ENCODE measurements at regions of chr7 and their contacts with region 1.

Region 1: GRCh38 chr7:2732959-2733584 is 45.1 kb downstream of the AMZ1 start:
- DNase-seq: peak; percentile 51 to 73 (median 72)
- H3K4me3 ChIP-seq: no peak overlapping the region
- H3K4me3 Mint-ChIP-seq: peak overlapping the region; percentile 42 to 83
- H3K27ac ChIP-seq: peak overlapping the region; percentile 13 to 76
- H3K27ac Mint-ChIP-seq: peak overlapping the region in 6 of 7 donors; percentile 13 to 95 (median 72)
- H3K4me1 ChIP-seq: peaks cover 82 to 84% of the 10 kb centered on the region in 2 donors
- H3K4me1 Mint-ChIP-seq: peaks cover 81% of the 10 kb centered on the region
- H3K27me3 ChIP-seq: no peaks in the 10 kb centered on the region
- H3K27me3 Mint-ChIP-seq: peaks cover 0 to 10% (median 6%) of the 10 kb centered on the region in 3 donors
- CTCF ChIP-seq: no peak

Region 2: GRCh38 chr7:2279896-2280295 is 453.2 kb before region 1 on chr7:
- intact Hi-C with region 1: no loop called
- DNase-seq: no peak
- H3K4me3 ChIP-seq: no peak overlapping the region
- H3K4me3 Mint-ChIP-seq: no peak overlapping the region
- H3K27ac ChIP-seq: no peak overlapping the region
- H3K27ac Mint-ChIP-seq: peak overlapping the region in 3 of 7 donors; percentile 21 to 40 (median 27)
- H3K4me1 ChIP-seq: no peaks in the 10 kb centered on the region
- H3K4me1 Mint-ChIP-seq: no peaks in the 10 kb centered on the region
- H3K27me3 ChIP-seq: no peaks in the 10 kb centered on the region
- H3K27me3 Mint-ChIP-seq: peaks cover 0 to 1% (median 1%) of the 10 kb centered on the region in 3 donors
- CTCF ChIP-seq: no peak

Region 3: DNA sequence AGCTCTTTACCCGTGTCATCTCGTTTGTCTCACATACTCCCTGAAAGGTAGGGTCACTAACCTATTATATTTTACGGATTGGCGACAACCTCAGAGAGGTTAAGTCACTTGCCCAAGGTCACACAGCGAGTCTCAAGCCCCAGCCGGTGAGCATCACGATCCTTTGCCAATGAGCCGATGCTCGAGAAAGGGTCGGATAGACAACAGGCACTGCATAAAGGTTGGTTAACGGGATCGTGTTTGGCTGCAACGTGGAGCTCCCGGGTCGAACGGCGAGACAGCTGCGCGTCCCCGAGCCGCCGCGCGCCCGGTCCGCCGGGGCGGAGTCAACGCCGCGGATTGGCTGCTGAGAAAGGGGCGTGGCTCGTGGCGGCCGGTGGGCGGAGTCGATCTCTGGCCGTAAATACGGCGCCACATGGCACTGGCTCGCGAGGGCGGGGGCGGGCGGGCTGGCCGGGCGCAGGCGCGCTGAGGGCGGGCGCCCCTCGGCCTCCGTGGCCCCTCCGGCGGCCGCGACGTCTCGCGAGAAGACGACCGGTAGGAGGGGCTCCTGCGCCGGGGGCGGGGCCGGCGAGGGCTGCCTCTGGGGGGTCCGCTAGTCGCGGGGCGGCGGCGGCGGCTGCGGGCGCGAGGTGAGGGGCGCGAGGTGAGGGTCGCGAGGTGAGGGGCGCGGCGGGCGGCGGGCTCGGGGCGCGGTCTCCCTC is 329.9 kb before region 1 on chr7 and contains the start of gene CHST12:
- intact Hi-C with region 1: no loop called
- DNase-seq: peak; percentile 89 to 93 (median 89)
- H3K4me3 ChIP-seq: peak within 1 kb of the TSS; percentile 68 to 85 (median 78)
- H3K4me3 Mint-ChIP-seq: peak within 1 kb of the TSS; percentile 82 to 90
- H3K27ac ChIP-seq: peak within 1 kb of the TSS in 1 of 2 donors; percentile 70
- H3K27ac Mint-ChIP-seq: peak within 1 kb of the TSS in 6 of 7 donors; percentile 10 to 66 (median 54)
- H3K4me1 ChIP-seq: peaks cover 66 to 69% of the 10 kb centered on the region in 2 donors
- H3K4me1 Mint-ChIP-seq: peaks cover 67% of the 10 kb centered on the region
- H3K27me3 ChIP-seq: no peaks in the 10 kb centered on the region
- H3K27me3 Mint-ChIP-seq: peaks cover 0 to 1% (median 0%) of the 10 kb centered on the region in 3 donors
- CTCF ChIP-seq: no peak
- polyA plus RNA-seq, gene CHST12: 5.8 to 10.6 (median 7.5) TPM

Region 4: DNA sequence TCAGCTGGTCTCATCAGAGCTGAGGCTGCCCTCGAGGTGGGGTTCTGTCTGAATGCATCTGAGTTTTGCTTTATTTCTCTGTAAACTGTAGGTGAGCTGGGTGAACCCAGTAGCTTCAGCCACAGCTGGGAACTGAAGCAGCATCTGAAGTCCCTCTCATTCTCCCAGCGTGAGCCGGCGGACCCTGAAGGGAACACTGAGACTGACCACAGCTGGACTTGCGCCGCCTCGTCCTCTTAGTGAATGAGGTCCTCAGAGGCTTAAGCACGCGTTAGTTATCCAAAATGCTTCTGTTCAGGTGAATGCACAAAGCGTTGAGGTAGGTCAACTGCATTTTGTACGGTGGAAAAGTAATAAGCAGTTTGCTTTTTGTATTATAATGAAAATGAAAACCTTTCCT is 31.5 kb after region 1 on chr7:
- intact Hi-C with region 1: loop called in 1 of 2 experiments (anchors 5 kb)
- DNase-seq: no peak
- H3K4me3 ChIP-seq: no peak overlapping the region
- H3K4me3 Mint-ChIP-seq: no peak overlapping the region
- H3K27ac ChIP-seq: no peak overlapping the region
- H3K27ac Mint-ChIP-seq: peak overlapping the region in 2 of 7 donors; percentile 9 to 41
- H3K4me1 ChIP-seq: peaks cover 25 to 26% of the 10 kb centered on the region in 2 donors
- H3K4me1 Mint-ChIP-seq: peaks cover 37% of the 10 kb centered on the region
- H3K27me3 ChIP-seq: no peaks in the 10 kb centered on the region
- H3K27me3 Mint-ChIP-seq: no peaks in the 10 kb centered on the region
- CTCF ChIP-seq: no peak

Region 5: GRCh38 chr7:2771274-2771731 is 38.2 kb after region 1 on chr7:
- intact Hi-C with region 1: loop called (anchors 5 kb)
- DNase-seq: no peak
- H3K4me3 ChIP-seq: no peak overlapping the region
- H3K4me3 Mint-ChIP-seq: no peak overlapping the region
- H3K27ac ChIP-seq: peak overlapping the region; percentile 91 to 93
- H3K27ac Mint-ChIP-seq: peak overlapping the region; percentile 98 to 100 (median 99)
- H3K4me1 ChIP-seq: peaks cover 47 to 49% of the 10 kb centered on the region in 2 donors
- H3K4me1 Mint-ChIP-seq: peaks cover 59% of the 10 kb centered on the region
- H3K27me3 ChIP-seq: no peaks in the 10 kb centered on the region
- H3K27me3 Mint-ChIP-seq: no peaks in the 10 kb centered on the region
- CTCF ChIP-seq: no peak

Region 6: GRCh38 chr7:2779086-2779485 is 46.0 kb after region 1 on chr7:
- intact Hi-C with region 1: loop called (anchors 5 kb)
- DNase-seq: peak in 1 of 3 donors; percentile 33
- H3K4me3 ChIP-seq: no peak overlapping the region
- H3K4me3 Mint-ChIP-seq: no peak overlapping the region
- H3K27ac ChIP-seq: no peak overlapping the region
- H3K27ac Mint-ChIP-seq: peak overlapping the region in 1 of 7 donors; percentile 19
- H3K4me1 ChIP-seq: peaks cover 23 to 35% of the 10 kb centered on the region in 2 donors
- H3K4me1 Mint-ChIP-seq: peaks cover 41% of the 10 kb centered on the region
- H3K27me3 ChIP-seq: no peaks in the 10 kb centered on the region
- H3K27me3 Mint-ChIP-seq: no peaks in the 10 kb centered on the region
- CTCF ChIP-seq: no peak

Region 7: GRCh38 chr7:2844165-2844898 is 111.3 kb after region 1 on chr7 and contains the start of gene GNA12:
- intact Hi-C with region 1: loop called in 1 of 2 experiments (anchors 10 kb)
- DNase-seq: peak; percentile 97 to 98 (median 98)
- H3K4me3 ChIP-seq: peak within 1 kb of the TSS; percentile 39 to 74 (median 66)
- H3K4me3 Mint-ChIP-seq: peak within 1 kb of the TSS; percentile 83 to 91
- H3K27ac ChIP-seq: peak within 1 kb of the TSS in 1 of 2 donors; percentile 56
- H3K27ac Mint-ChIP-seq: peak within 1 kb of the TSS in 6 of 7 donors; percentile 74 to 86 (median 80)
- H3K4me1 ChIP-seq: peaks cover 14 to 21% of the 10 kb centered on the region in 2 donors
- H3K4me1 Mint-ChIP-seq: peaks cover 45% of the 10 kb centered on the region
- H3K27me3 ChIP-seq: no peaks in the 10 kb centered on the region
- H3K27me3 Mint-ChIP-seq: peaks cover 4 to 9% (median 6%) of the 10 kb centered on the region in 3 donors
- CTCF ChIP-seq: no peak
- polyA plus RNA-seq, gene GNA12: 3.4 to 25.9 (median 10.6) TPM

Region 8: DNA sequence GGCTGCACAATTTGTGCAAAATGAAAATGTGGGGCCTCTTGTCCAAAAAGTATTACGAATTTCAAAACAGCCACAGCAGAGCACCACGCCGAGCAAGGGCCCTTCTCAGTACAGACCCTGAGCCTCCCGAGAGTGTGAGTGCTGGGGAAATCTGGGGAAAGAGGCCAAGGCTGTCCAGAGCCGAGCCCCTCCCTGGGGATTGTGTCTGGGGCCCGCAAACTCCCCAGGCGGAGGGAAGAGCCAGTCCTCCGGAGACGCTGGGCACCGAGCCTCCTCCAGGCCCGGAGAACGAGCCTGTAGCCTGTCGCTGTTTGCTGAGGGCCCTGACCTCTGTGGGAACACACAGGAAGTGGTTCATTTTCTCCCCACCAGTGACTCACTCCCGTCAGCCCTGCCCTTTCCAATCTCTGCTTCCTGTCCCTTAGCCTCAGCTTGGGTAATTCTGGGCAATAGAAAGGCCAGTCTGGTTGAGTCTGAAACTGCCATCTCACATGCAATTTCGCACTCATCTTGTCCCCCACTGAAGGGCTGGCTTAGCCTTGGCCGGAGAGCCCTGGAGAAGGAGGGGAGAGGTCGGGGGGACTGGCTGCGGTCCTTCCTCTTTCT is 130.5 kb after region 1 on chr7:
- intact Hi-C with region 1: loop called in 1 of 2 experiments (anchors 5 kb)
- DNase-seq: peak; percentile 96 to 99 (median 98)
- H3K4me3 ChIP-seq: peak overlapping the region in 2 of 3 experiments; percentile 28 to 49
- H3K4me3 Mint-ChIP-seq: peak overlapping the region; percentile 67 to 91
- H3K27ac ChIP-seq: peak overlapping the region; percentile 93 to 99
- H3K27ac Mint-ChIP-seq: peak overlapping the region; percentile 98 to 100 (median 100)
- H3K4me1 ChIP-seq: peaks cover 29% of the 10 kb centered on the region in 2 donors
- H3K4me1 Mint-ChIP-seq: peaks cover 30% of the 10 kb centered on the region
- H3K27me3 ChIP-seq: peaks cover 0 to 10% of the 10 kb centered on the region in 2 donors
- H3K27me3 Mint-ChIP-seq: peaks cover 40 to 55% (median 42%) of the 10 kb centered on the region in 3 donors
- CTCF ChIP-seq: no peak

Measured in CD14-positive monocyte (primary cell).